Right ventricle myocardium superior (tissue), 1 donor: ENCODE measurements at regions of chr7 and their contacts with region 1.

Region 1: GRCh38 chr7:91089382-91089963 is 174.8 kb upstream of the FZD1 start:
- DNase-seq: no peak
- ATAC-seq: peak; percentile 76

Region 2: DNA sequence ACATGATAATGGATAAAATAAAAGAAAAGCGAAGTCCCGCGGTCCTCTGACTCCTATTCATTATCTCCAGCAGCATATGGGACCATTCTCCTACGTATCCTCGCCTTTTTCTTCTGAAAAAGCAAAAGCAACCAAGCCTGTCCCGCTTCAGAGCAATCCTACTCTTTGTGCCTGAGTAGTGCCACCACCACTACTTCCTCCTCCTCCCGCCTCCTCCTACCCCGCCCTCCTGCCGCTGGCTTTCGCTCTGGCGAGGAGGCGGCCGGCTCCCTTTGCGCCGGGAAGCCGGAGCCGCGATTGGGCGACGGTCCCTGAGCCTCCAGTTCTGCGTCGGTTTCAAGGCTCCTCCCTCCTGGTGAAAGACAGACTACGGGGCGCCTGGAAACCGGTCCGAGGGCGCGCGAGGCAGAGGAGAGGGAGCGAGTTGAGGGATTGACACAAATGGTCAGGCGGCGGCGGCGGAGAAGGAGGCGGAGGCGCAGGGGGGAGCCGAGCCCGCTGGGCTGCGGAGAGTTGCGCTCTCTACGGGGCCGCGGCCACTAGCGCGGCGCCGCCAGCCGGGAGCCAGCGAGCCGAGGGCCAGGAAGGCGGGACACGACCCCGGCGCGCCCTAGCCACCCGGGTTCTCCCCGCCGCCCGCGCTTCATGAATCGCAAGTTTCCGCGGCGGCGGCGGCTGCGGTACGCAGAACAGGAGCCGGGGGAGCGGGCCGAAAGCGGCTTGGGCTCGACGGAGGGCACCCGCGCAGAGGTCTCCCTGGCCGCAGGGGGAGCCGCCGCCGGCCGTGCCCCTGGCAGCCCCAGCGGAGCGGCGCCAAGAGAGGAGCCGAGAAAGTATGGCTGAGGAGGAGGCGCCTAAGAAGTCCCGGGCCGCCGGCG is 174.8 kb after region 1 on chr7 and contains the start of gene FZD1:
- intact Hi-C with region 1: loop called (anchors 10 kb)
- DNase-seq: peak; percentile 97
- ATAC-seq: peak; percentile 96
- total RNA-seq, gene FZD1: 8.6 TPM

Region 3: DNA sequence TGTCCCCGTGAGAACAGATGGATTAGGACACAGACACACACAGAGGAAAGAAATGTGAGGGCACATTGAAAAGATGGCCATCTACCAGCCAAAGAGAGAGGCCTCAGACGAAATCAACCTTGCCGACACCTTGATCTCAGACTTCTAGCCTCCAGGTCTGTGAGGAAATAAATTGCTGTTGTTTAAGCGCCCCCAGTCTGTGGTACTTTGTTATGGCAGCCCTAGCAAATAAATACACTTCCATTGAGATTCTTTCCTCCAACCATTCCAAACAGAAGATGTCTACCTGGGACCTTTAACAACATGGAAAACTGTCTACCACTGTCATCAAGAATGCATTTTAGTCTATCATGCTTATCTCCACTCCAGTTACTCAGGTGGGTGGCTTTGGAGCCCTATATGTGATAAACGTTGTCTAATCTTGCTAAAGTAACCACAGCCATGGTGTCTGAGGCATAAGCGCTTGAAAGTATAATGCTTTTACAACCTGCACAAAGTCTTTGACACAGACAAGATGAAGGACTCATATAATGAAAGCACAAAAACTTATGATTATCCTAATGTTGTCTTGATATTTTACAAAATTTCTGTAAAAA is 546.8 kb after region 1 on chr7:
- intact Hi-C with region 1: loop called (anchors 10 kb)
- DNase-seq: no peak
- ATAC-seq: no peak

Region 4: DNA sequence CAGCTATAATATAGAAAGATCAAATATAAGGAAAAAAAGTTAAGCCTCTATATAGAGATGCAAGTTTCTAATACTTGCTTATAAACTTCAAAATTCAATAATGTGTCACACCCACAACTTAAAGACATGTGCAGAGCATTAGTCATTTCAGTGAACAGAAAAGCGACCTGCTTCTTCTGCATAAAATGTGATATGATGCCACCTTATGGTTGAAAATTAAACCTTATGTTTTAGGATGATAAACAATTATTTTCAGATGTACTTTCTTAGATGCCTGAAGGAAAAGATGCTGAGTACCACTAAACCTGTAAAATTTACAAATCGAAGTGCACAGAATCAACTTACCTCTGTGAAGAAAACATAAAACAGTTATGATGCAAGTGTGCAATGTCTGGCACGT is 695.0 kb after region 1 on chr7:
- intact Hi-C with region 1: loop called (anchors 5 kb)
- DNase-seq: no peak
- ATAC-seq: peak; percentile 64